SK-N-SH (cell line): ENCODE measurements at regions of chr10 and their contacts with region 1.

Region 1: GRCh38 chr10:92965314-92965713 is 95.3 kb upstream of the CYP26C1 start:
- DNase-seq: peak; percentile 15
- H3K4me3 ChIP-seq: peak overlapping the region in 1 of 2 experiments; percentile 19; a peak in 1 of 4 replicates
- H3K27ac ChIP-seq: peak overlapping the region in 1 of 2 experiments; percentile 52; a peak in 2 of 4 replicates
- H3K4me1 ChIP-seq: no peaks in the 10 kb centered on the region
- H3K27me3 ChIP-seq: no peaks in the 10 kb centered on the region
- CTCF ChIP-seq: peak; percentile 85
- EP300 ChIP-seq: no peak
- RAD21 ChIP-seq: peak; percentile 55

Region 2: DNA sequence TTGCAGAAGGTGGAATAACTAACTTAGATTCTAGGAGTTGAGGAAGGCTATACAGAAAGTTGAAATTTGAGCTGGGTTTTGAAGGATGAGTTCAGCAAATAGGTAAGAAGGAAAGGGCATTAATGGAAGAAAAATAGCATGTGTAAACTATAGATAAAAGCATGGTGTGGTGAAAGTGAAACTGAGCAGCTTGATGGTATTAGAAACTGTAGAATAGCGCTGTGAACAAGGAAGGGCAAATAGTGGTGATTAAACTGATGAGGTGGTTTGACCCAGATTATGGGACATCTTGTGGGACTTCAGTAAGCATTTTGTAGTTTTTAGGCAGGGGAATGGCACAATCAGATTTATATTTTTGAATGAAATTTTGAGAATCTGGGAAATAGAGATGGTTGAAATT is 26.5 kb before region 1 on chr10:
- CTCF ChIA-PET with region 1: interaction called, 13 read pairs
- POLR2A ChIA-PET with region 1: no interaction called
- DNase-seq: no peak
- H3K4me3 ChIP-seq: no peak overlapping the region
- H3K27ac ChIP-seq: no peak overlapping the region
- H3K4me1 ChIP-seq: no peaks in the 10 kb centered on the region
- H3K27me3 ChIP-seq: no peaks in the 10 kb centered on the region
- CTCF ChIP-seq: no peak
- EP300 ChIP-seq: no peak
- RAD21 ChIP-seq: no peak

Region 3: GRCh38 chr10:92946491-92946890 is 18.8 kb before region 1 on chr10:
- CTCF ChIA-PET with region 1: interaction called, 12 read pairs
- POLR2A ChIA-PET with region 1: no interaction called
- DNase-seq: no peak
- H3K4me3 ChIP-seq: no peak overlapping the region
- H3K27ac ChIP-seq: no peak overlapping the region
- H3K4me1 ChIP-seq: no peaks in the 10 kb centered on the region
- H3K27me3 ChIP-seq: no peaks in the 10 kb centered on the region
- CTCF ChIP-seq: no peak
- EP300 ChIP-seq: no peak
- RAD21 ChIP-seq: no peak

Region 4: DNA sequence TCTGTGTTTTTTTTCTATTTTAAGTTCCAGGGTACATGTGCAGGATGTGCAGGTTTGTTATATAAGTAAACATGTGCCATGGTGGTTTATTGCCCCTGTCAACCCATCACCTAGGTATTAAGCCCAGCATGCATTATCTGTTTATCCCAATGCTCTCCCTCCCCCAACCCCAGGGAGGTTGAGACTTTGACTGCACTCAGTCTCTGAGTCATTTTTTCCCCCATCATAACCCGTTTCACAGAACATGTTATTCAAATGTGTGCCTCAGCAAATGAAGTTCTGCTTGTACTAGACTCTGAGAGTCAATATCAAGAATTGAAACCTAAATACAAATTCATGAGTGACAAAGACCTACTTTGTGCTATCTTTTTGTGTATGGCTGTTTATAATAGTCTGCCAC is 25.3 kb after region 1 on chr10:
- CTCF ChIA-PET with region 1: interaction called, 17 read pairs
- POLR2A ChIA-PET with region 1: no interaction called
- DNase-seq: no peak
- H3K4me3 ChIP-seq: no peak overlapping the region
- H3K27ac ChIP-seq: no peak overlapping the region
- H3K4me1 ChIP-seq: peaks cover 0 to 6% of the 10 kb centered on the region in 2 experiments; a peak in 2 of 4 replicates
- H3K27me3 ChIP-seq: no peaks in the 10 kb centered on the region
- CTCF ChIP-seq: no peak
- EP300 ChIP-seq: no peak
- RAD21 ChIP-seq: no peak

Region 5: DNA sequence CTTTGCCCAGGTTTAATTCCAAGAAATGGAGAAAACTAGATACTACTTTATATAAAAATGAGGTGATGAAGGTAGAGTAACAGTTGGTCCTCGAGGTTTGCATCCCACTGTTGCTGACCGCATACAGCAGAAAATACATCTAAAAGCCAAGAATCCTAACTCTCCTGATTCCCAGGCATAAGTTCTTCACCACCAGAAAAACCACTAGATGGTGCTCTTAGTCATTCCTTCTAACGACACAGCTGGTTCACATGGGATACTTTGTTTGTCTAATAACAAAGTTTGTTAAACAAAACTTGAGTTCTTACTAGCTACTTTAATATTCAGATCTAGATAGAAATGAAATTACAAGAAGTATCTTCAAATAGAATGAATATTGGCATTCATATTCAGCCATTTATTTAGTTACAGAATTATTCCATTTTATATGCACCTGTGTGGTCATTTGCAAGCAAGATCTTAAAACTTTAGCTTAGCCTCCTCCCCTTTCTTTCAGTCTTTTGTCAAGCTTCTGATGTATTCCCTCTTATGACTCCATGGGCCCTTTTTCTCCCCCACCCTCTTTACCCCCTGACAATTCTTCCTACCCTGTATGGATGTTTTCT is 41.2 kb after region 1 on chr10:
- CTCF ChIA-PET with region 1: interaction called, 14 read pairs
- POLR2A ChIA-PET with region 1: no interaction called
- DNase-seq: peak; percentile 30
- H3K4me3 ChIP-seq: no peak overlapping the region
- H3K27ac ChIP-seq: no peak overlapping the region
- H3K4me1 ChIP-seq: no peaks in the 10 kb centered on the region
- H3K27me3 ChIP-seq: no peaks in the 10 kb centered on the region
- CTCF ChIP-seq: peak; percentile 80
- EP300 ChIP-seq: no peak
- RAD21 ChIP-seq: peak; percentile 75

Region 6: GRCh38 chr10:93074147-93074596 is 108.9 kb after region 1 on chr10:
- CTCF ChIA-PET with region 1: interaction called, 10 read pairs
- POLR2A ChIA-PET with region 1: no interaction called
- DNase-seq: peak; percentile 71
- H3K4me3 ChIP-seq: peak overlapping the region; percentile 46 to 52
- H3K27ac ChIP-seq: no peak overlapping the region
- H3K4me1 ChIP-seq: peaks cover 0 to 37% of the 10 kb centered on the region in 2 experiments; a peak in 1 of 4 replicates
- H3K27me3 ChIP-seq: peaks cover 45% of the 10 kb centered on the region
- CTCF ChIP-seq: no peak; the same call in 1 of the 2 replicates
- EP300 ChIP-seq: no peak
- RAD21 ChIP-seq: no peak